IMR-90 (cell line): ENCODE measurements at regions of chr4 and their contacts with region 1.

Region 1: GRCh38 chr4:101000496-101000895 is 346.8 kb downstream of the PPP3CA start:
- DNase-seq: no peak
- ATAC-seq: no peak
- H3K4me3 ChIP-seq: no peak overlapping the region
- H3K27ac ChIP-seq: no peak overlapping the region
- H3K4me1 ChIP-seq: no peaks in the 10 kb centered on the region
- H3K27me3 ChIP-seq: peaks cover 1% of the 10 kb centered on the region; the same call in 1 of the 2 replicates
- CTCF ChIP-seq: no peak
- POLR2A ChIP-seq: no peak
- RAD21 ChIP-seq: no peak

Region 2: GRCh38 chr4:100679926-100680325 is 320.6 kb before region 1 on chr4:
- CTCF ChIA-PET with region 1: no interaction called
- POLR2A ChIA-PET with region 1: no interaction called
- dilution Hi-C with region 1: no loop called
- in situ Hi-C with region 1: no loop called
- intact Hi-C with region 1: no loop called
- DNase-seq: no peak
- ATAC-seq: no peak
- H3K4me3 ChIP-seq: no peak overlapping the region
- H3K27ac ChIP-seq: no peak overlapping the region
- H3K4me1 ChIP-seq: no peaks in the 10 kb centered on the region
- H3K27me3 ChIP-seq: no peaks in the 10 kb centered on the region
- CTCF ChIP-seq: no peak
- POLR2A ChIP-seq: no peak
- RAD21 ChIP-seq: no peak

Region 3: GRCh38 chr4:100907465-100908454 is 92.7 kb before region 1 on chr4:
- CTCF ChIA-PET with region 1: no interaction called
- POLR2A ChIA-PET with region 1: interaction called, 10 read pairs
- dilution Hi-C with region 1: no loop called
- in situ Hi-C with region 1: no loop called
- intact Hi-C with region 1: no loop called
- DNase-seq: peak; percentile 5
- ATAC-seq: no peak
- H3K4me3 ChIP-seq: no peak overlapping the region
- H3K27ac ChIP-seq: no peak overlapping the region
- H3K4me1 ChIP-seq: no peaks in the 10 kb centered on the region
- H3K27me3 ChIP-seq: no peaks in the 10 kb centered on the region
- CTCF ChIP-seq: peak; percentile 21; the same call in 1 of the 2 replicates
- POLR2A ChIP-seq: no peak
- RAD21 ChIP-seq: peak; percentile 37